Naive thymus-derived CD4-positive, alpha-beta T cell (primary cell): ENCODE measurements at regions of chr20 and their contacts with region 1.

Region 1: DNA sequence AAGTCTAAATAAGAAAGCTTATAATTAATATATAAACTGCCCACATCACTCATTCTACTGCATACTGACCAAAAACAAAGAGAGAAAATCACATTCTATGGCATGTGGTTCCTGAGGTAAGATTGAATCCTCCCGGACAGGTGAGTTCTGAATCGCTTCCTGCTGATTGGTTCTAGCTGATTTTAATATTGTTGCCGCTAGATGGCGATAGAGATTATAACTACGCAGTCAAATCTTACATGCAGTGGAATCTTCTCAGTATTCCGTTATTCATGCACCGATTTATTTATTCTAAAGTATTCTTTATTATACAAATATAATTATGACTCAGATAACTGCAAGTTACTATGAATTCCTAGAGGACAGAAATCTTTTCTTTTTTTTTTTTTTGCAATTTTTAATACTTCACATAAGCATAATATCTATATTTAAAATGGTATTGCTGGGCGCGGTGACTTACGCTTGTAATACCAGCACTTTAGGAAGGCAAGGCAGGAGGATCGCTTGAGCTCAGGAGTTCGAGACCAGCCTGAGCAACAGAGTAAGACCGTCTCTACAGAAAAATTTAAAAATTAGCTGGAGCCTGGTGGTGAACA is 24.2 kb upstream of the TMX4 start:
- DNase-seq: peak in 7 of 9 donors; percentile 35 to 73 (median 58)
- ATAC-seq: peak; percentile 87
- H3K4me3 ChIP-seq: no peak overlapping the region
- H3K4me3 Mint-ChIP-seq: no peak overlapping the region
- H3K27ac ChIP-seq: no peak overlapping the region
- H3K27ac Mint-ChIP-seq: no peak overlapping the region
- H3K4me1 ChIP-seq: no peaks in the 10 kb centered on the region
- H3K4me1 Mint-ChIP-seq: peaks cover 0 to 4% (median 3%) of the 10 kb centered on the region in 7 donors
- H3K27me3 ChIP-seq: no peaks in the 10 kb centered on the region
- H3K27me3 Mint-ChIP-seq: peaks cover 4 to 20% (median 11%) of the 10 kb centered on the region in 5 donors

Region 2: GRCh38 chr20:7770578-7770977 is 273.2 kb before region 1 on chr20:
- CTCF ChIA-PET with region 1: no interaction called
- POLR2A ChIA-PET with region 1: no interaction called
- intact Hi-C with region 1: no loop called
- DNase-seq: no peak
- ATAC-seq: no peak
- H3K4me3 ChIP-seq: no peak overlapping the region
- H3K4me3 Mint-ChIP-seq: no peak overlapping the region
- H3K27ac ChIP-seq: no peak overlapping the region
- H3K27ac Mint-ChIP-seq: no peak overlapping the region
- H3K4me1 ChIP-seq: no peaks in the 10 kb centered on the region
- H3K4me1 Mint-ChIP-seq: peaks cover 0 to 8% (median 0%) of the 10 kb centered on the region in 7 donors
- H3K27me3 ChIP-seq: no peaks in the 10 kb centered on the region
- H3K27me3 Mint-ChIP-seq: peaks cover 0 to 4% (median 0%) of the 10 kb centered on the region in 5 donors

Region 3: GRCh38 chr20:8057871-8058270 is 14.1 kb after region 1 on chr20:
- CTCF ChIA-PET with region 1: no interaction called
- POLR2A ChIA-PET with region 1: no interaction called
- intact Hi-C with region 1: no loop called
- DNase-seq: no peak
- ATAC-seq: no peak
- H3K4me3 ChIP-seq: no peak overlapping the region
- H3K4me3 Mint-ChIP-seq: no peak overlapping the region
- H3K27ac ChIP-seq: no peak overlapping the region
- H3K27ac Mint-ChIP-seq: no peak overlapping the region
- H3K4me1 ChIP-seq: no peaks in the 10 kb centered on the region
- H3K4me1 Mint-ChIP-seq: no peaks in the 10 kb centered on the region
- H3K27me3 ChIP-seq: no peaks in the 10 kb centered on the region
- H3K27me3 Mint-ChIP-seq: peaks cover 0 to 12% (median 0%) of the 10 kb centered on the region in 5 donors

Region 4: GRCh38 chr20:8305449-8305978 is 261.7 kb after region 1 on chr20:
- CTCF ChIA-PET with region 1: no interaction called
- POLR2A ChIA-PET with region 1: no interaction called
- intact Hi-C with region 1: loop called (anchors 1 kb)
- DNase-seq: peak; percentile 36 to 78 (median 64)
- ATAC-seq: peak; percentile 95
- H3K4me3 ChIP-seq: no peak overlapping the region
- H3K4me3 Mint-ChIP-seq: peak overlapping the region in 2 of 10 donors; percentile 28 to 45
- H3K27ac ChIP-seq: no peak overlapping the region
- H3K27ac Mint-ChIP-seq: no peak overlapping the region
- H3K4me1 ChIP-seq: peaks cover 0 to 8% of the 10 kb centered on the region in 2 donors
- H3K4me1 Mint-ChIP-seq: peaks cover 0 to 8% (median 0%) of the 10 kb centered on the region in 7 donors
- H3K27me3 ChIP-seq: no peaks in the 10 kb centered on the region
- H3K27me3 Mint-ChIP-seq: no peaks in the 10 kb centered on the region

Region 5: GRCh38 chr20:8389381-8390036 is 345.7 kb after region 1 on chr20:
- CTCF ChIA-PET with region 1: interaction called, 18 read pairs
- POLR2A ChIA-PET with region 1: no interaction called
- intact Hi-C with region 1: loop called (anchors 1 kb)
- DNase-seq: peak in 5 of 9 donors; percentile 13 to 40 (median 28)
- ATAC-seq: peak; percentile 55
- H3K4me3 ChIP-seq: no peak overlapping the region
- H3K4me3 Mint-ChIP-seq: no peak overlapping the region
- H3K27ac ChIP-seq: no peak overlapping the region
- H3K27ac Mint-ChIP-seq: peak overlapping the region in 1 of 9 donors; percentile 23
- H3K4me1 ChIP-seq: no peaks in the 10 kb centered on the region
- H3K4me1 Mint-ChIP-seq: peaks cover 0 to 6% (median 0%) of the 10 kb centered on the region in 7 donors
- H3K27me3 ChIP-seq: no peaks in the 10 kb centered on the region
- H3K27me3 Mint-ChIP-seq: peaks cover 0 to 9% (median 0%) of the 10 kb centered on the region in 5 donors